PC-3 (cell line): ENCODE measurements at regions of chr22 and their contacts with region 1.

Region 1: DNA sequence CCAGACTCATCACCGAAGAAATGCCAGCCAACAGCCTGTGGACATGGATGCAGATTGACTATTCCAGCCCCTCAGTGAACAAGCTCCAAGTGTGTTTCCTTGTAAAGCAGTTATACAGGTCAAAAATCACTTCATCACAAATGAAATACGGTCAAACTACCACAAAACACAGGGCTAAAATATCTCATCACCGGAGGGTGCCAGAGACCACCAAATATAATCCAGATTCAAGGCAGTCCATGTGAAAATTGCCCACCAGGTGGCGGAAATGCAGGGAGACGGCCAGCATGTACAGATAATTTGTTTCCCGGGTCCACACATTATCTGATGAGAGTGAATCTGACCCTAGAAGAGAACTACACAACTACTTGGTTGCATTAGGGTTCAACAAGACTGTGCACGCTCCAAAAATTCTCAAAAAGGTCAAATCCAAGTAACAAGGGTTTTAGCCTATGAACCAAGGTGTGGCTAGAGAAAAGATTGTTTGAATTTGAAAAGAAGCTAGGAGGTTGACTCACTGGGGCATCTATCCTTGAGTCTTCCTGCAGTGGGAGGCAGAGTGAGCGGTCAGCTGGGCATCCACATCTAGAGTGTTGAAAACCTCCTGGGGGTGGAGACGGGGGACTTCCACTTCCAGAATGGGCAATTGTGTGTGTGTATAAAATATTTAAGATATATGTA is 71.7 kb downstream of the IGLL5 start:
- DNase-seq: peak; percentile 80
- ATAC-seq: peak; percentile 61
- H3K4me3 ChIP-seq: no peak overlapping the region
- H3K27ac ChIP-seq: no peak overlapping the region
- H3K4me1 ChIP-seq: no peaks in the 10 kb centered on the region
- H3K27me3 ChIP-seq: peaks cover 10% of the 10 kb centered on the region
- CTCF ChIP-seq: peak; percentile 98

Region 2: GRCh38 chr22:22463855-22464540 is 495.3 kb before region 1 on chr22:
- CTCF ChIA-PET with region 1: no interaction called
- POLR2A ChIA-PET with region 1: no interaction called
- intact Hi-C with region 1: loop called (anchors 5 kb)
- DNase-seq: peak; percentile 79
- ATAC-seq: peak; percentile 70
- H3K4me3 ChIP-seq: no peak overlapping the region
- H3K27ac ChIP-seq: no peak overlapping the region
- H3K4me1 ChIP-seq: no peaks in the 10 kb centered on the region
- H3K27me3 ChIP-seq: no peaks in the 10 kb centered on the region
- CTCF ChIP-seq: peak; percentile 74

Region 3: DNA sequence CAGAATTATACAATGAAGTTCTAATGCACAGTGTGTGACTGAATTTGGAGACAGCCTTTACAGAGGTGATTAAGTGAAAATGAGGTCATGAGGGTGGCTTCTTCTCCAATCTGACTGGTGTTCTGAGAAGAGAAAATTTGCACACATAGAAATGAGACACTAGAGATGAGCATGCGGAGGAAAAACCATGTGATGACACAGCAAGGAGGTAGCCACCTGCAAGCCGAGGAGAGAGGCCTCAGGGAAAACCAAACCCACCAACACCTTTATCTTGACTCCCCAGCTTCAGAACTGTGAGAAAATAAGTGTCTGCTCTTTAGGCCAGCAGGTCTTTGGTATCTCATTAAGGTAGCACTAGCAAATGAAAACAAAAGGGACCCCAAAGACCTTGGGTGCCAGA is 221.7 kb before region 1 on chr22:
- CTCF ChIA-PET with region 1: no interaction called
- POLR2A ChIA-PET with region 1: no interaction called
- intact Hi-C with region 1: no loop called
- DNase-seq: no peak
- ATAC-seq: no peak
- H3K4me3 ChIP-seq: no peak overlapping the region
- H3K27ac ChIP-seq: no peak overlapping the region
- H3K4me1 ChIP-seq: no peaks in the 10 kb centered on the region
- H3K27me3 ChIP-seq: peaks cover 36% of the 10 kb centered on the region
- CTCF ChIP-seq: no peak

Region 4: GRCh38 chr22:22787786-22788459 is 171.4 kb before region 1 on chr22:
- CTCF ChIA-PET with region 1: no interaction called
- POLR2A ChIA-PET with region 1: no interaction called
- intact Hi-C with region 1: loop called (anchors 5 kb)
- DNase-seq: peak; percentile 60
- ATAC-seq: peak; percentile 49
- H3K4me3 ChIP-seq: no peak overlapping the region
- H3K27ac ChIP-seq: no peak overlapping the region
- H3K4me1 ChIP-seq: no peaks in the 10 kb centered on the region
- H3K27me3 ChIP-seq: peaks cover 30% of the 10 kb centered on the region
- CTCF ChIP-seq: peak; percentile 80

Region 5: GRCh38 chr22:22981670-22982571 is 22.6 kb after region 1 on chr22:
- CTCF ChIA-PET with region 1: no interaction called
- POLR2A ChIA-PET with region 1: no interaction called
- intact Hi-C with region 1: no loop called
- DNase-seq: no peak
- ATAC-seq: no peak
- H3K4me3 ChIP-seq: no peak overlapping the region
- H3K27ac ChIP-seq: no peak overlapping the region
- H3K4me1 ChIP-seq: no peaks in the 10 kb centered on the region
- H3K27me3 ChIP-seq: no peaks in the 10 kb centered on the region
- CTCF ChIP-seq: no peak

Region 6: GRCh38 chr22:23088199-23088604 is 128.9 kb after region 1 on chr22:
- CTCF ChIA-PET with region 1: interaction called, 10 read pairs
- POLR2A ChIA-PET with region 1: no interaction called
- intact Hi-C with region 1: no loop called
- DNase-seq: no peak
- ATAC-seq: no peak
- H3K4me3 ChIP-seq: no peak overlapping the region
- H3K27ac ChIP-seq: no peak overlapping the region
- H3K4me1 ChIP-seq: no peaks in the 10 kb centered on the region
- H3K27me3 ChIP-seq: no peaks in the 10 kb centered on the region
- CTCF ChIP-seq: no peak

Region 7: DNA sequence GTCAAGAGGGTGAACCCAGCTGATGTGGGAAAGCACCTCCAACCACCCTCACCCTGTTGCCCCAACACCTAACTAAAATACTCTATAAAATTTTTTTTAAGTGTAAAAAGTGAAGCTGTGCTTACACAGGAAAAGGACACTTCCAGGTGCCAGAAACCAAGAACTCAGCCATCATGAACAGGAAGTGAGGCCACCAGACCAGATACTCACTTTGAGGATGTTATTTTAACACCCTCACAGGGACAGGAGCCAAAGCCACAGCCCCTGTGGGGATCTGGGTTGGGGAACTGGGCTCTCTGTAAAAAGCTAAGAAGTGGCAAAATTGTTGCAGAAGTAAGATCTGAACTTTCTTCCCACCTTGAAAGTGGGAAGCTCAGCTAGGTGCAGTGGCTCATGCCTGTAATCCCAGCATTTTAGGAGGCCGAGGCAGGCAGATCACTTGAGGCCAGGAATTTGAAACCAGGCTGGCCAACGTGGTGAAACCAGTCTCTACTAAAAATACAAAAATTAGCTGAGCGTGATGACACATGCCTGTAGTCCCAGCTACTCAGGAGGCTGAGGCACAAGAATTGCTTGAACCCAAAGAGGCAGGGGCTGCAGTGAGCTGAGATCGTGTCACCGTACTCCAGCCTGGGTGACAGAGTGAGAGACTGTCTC is 178.7 kb after region 1 on chr22:
- CTCF ChIA-PET with region 1: no interaction called
- POLR2A ChIA-PET with region 1: no interaction called
- intact Hi-C with region 1: no loop called
- DNase-seq: no peak
- ATAC-seq: no peak
- H3K4me3 ChIP-seq: no peak overlapping the region
- H3K27ac ChIP-seq: no peak overlapping the region
- H3K4me1 ChIP-seq: no peaks in the 10 kb centered on the region
- H3K27me3 ChIP-seq: no peaks in the 10 kb centered on the region
- CTCF ChIP-seq: no peak

Region 8: DNA sequence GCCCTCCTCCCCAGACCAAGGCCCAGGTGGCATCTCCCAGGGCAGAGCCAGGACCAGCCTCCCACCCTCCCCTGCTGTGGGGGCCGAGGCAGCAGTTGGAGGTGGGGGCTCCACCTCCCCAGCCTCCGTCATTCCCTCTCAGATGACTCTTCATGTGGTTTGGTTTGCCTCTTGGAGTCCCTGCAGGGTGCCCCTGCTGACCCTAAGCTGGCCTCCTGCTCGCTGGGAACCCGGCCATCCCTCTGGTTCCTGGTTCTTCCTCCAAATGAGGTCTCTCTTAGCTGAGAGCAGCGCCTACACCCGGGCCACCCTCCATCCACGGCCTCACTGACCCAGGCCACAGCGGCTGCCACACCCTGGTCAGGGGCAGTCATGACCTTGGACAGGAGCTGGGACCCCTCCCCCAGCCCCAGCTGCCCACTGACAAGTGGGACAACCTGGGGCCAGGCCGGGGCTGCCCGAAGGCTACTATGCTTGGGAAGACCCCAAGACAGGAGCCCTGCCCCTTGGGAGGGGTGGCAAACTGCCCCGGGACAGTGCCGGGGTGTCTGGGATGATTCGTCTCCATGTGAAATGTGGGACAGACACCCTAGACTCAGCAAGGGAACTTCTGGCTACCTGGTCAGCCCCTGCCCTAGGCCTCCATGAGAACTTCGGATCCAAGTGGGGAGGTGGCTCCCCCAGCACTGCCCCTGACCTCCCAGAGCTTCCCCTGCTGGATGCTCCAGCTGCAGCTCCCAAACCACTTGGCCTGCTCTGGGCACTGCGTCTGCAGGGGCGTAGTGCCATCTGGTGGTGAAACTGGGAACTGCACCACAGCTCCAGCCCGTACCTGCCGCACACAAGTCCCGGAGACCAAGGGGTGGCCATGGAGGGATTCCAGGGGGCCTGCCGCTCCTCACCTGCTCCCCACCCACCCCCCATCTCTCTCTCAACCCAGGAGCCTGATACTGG is 426.3 kb after region 1 on chr22:
- CTCF ChIA-PET with region 1: interaction called, 3 read pairs
- POLR2A ChIA-PET with region 1: no interaction called
- intact Hi-C with region 1: loop called (anchors 5 kb)
- DNase-seq: peak; percentile 80
- ATAC-seq: peak; percentile 94
- H3K4me3 ChIP-seq: no peak overlapping the region
- H3K27ac ChIP-seq: no peak overlapping the region
- H3K4me1 ChIP-seq: no peaks in the 10 kb centered on the region
- H3K27me3 ChIP-seq: no peaks in the 10 kb centered on the region
- CTCF ChIP-seq: peak; percentile 82